ENCODE measurements at regions of chr1 and their contacts with region 1.

Region 1: GRCh38 chr1:185646202-185646683 is 87.9 kb upstream of the HMCN1 start:
- DNase-seq: peak; percentile 80
- H3K4me3 Mint-ChIP-seq: peak overlapping the region; percentile 6
- H3K27ac Mint-ChIP-seq: peak overlapping the region; percentile 30
- H3K4me1 Mint-ChIP-seq: peaks cover 53% of the 10 kb centered on the region
- H3K27me3 Mint-ChIP-seq: no peaks in the 10 kb centered on the region
- CTCF ChIP-seq: no peak

Region 2: GRCh38 chr1:185566995-185567394 is 79.2 kb before region 1 on chr1:
- CTCF ChIA-PET with region 1: interaction called, 3 read pairs
- intact Hi-C with region 1: loop called (anchors 2 kb)
- DNase-seq: peak; percentile 28
- H3K4me3 Mint-ChIP-seq: peak overlapping the region; percentile 14
- H3K27ac Mint-ChIP-seq: peak overlapping the region; percentile 91
- H3K4me1 Mint-ChIP-seq: peaks cover 83% of the 10 kb centered on the region
- H3K27me3 Mint-ChIP-seq: no peaks in the 10 kb centered on the region
- CTCF ChIP-seq: no peak